PC-3 (cell line): ENCODE measurements at regions of chr4 and their contacts with region 1.

Region 1: GRCh38 chr4:26424838-26425237 is 65.4 kb downstream of the CCKAR start:
- DNase-seq: no peak
- ATAC-seq: no peak
- H3K4me3 ChIP-seq: no peak overlapping the region
- H3K27ac ChIP-seq: no peak overlapping the region
- H3K4me1 ChIP-seq: no peaks in the 10 kb centered on the region
- H3K27me3 ChIP-seq: no peaks in the 10 kb centered on the region
- CTCF ChIP-seq: peak; percentile 52

Region 2: DNA sequence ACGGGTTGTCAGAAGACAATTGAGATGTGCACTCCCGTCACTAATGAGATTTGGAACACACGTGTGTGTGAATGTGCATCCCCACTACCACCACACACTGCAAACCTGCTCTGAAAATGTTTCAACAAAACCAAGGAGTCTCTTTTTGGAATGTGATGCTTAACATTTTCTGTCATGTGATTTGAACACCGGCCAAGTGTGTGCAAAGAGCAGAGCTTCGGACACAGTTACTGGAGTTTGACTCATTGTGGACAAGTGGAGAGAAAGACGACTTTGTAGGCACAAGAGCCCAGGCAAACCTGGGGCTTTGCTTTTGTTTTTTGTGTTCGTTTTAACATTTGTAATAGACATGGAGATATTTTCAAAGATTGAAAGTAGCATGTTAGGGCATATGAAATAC is 16.3 kb after region 1 on chr4:
- CTCF ChIA-PET with region 1: no interaction called
- POLR2A ChIA-PET with region 1: interaction called, 11 read pairs
- intact Hi-C with region 1: no loop called
- DNase-seq: no peak
- ATAC-seq: no peak
- H3K4me3 ChIP-seq: no peak overlapping the region
- H3K27ac ChIP-seq: no peak overlapping the region
- H3K4me1 ChIP-seq: no peaks in the 10 kb centered on the region
- H3K27me3 ChIP-seq: no peaks in the 10 kb centered on the region
- CTCF ChIP-seq: no peak